ENCODE measurements at regions of chr7 and their contacts with region 1.

Region 1: DNA sequence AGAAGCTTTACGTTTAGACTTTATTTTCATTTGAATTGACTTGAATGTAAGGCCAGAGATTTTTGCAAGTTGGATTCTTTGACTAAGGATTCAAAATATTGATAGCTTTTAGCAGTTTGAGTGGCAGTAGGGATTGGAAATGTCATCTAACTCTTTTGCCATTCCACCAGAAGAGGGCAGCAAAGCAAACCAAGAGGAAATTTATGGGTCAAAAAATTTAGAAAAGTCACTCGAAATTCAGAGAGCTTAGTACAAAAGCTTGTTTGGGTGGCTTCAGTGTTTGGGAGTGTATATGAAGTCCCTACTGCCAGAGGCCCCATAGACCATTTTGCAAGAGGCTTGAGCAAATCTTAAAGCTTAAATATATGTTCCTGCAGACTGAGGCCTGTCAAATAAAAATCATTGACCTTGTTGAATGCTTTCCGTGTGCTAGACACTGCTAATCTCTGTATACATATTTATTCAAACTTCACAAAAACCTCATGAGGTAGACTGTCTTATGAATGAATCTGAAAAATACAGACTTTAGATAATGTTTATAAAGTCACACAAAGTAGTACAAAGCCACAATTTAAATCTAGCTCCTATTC is 44.6 kb upstream of the RSBN1L start:
- DNase-seq: peak; percentile 61
- H3K4me3 ChIP-seq: no peak overlapping the region; a peak in 1 of 4 replicates
- H3K27ac ChIP-seq: no peak overlapping the region
- H3K4me1 ChIP-seq: peaks cover 0 to 7% of the 10 kb centered on the region in 2 experiments; a peak in 1 of 4 replicates
- H3K27me3 ChIP-seq: no peaks in the 10 kb centered on the region
- CTCF ChIP-seq: peak; percentile 97
- EP300 ChIP-seq: no peak
- RAD21 ChIP-seq: peak; percentile 73

Region 2: DNA sequence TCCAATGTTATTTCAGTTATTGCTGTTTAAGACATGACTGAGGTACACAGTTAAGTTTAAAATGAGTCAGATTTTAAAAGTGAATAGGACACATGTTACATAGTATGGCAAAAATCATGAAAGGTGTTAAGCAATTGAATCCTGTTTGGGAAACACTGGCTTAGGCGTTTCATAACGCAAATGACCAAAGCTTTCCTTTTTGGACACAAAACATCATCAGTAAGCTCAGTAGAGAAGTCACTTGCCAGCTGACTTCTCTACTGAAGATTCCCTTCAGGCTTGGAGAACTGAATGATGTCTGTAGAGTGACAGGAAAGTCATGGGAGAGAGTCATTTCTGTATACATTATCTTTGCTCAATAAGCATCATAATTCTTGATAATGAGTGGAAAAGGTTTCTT is 19.8 kb before region 1 on chr7:
- CTCF ChIA-PET with region 1: interaction called, 19 read pairs
- POLR2A ChIA-PET with region 1: no interaction called
- DNase-seq: no peak
- H3K4me3 ChIP-seq: no peak overlapping the region
- H3K27ac ChIP-seq: no peak overlapping the region
- H3K4me1 ChIP-seq: no peaks in the 10 kb centered on the region
- H3K27me3 ChIP-seq: no peaks in the 10 kb centered on the region
- CTCF ChIP-seq: no peak
- EP300 ChIP-seq: no peak
- RAD21 ChIP-seq: no peak

Region 3: DNA sequence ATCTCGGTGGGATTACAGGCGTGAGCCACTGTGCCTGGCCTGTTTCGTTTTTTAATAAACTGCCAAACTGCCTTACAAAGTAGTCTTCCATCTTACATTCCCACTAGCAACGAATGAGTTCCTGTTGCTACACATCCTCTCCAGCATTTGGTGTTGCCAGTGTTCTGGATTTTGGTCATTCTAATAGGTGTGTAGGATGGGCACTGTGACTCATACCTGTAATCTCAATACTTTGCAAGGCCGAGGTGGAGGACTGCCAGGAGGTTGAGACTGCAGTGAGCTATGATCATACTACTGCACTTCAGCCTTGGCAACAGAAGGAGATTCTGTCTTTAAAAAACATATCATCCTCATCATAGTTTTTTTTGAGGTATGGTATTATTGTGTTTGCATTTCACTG is 23.2 kb after region 1 on chr7:
- CTCF ChIA-PET with region 1: interaction called, 21 read pairs
- POLR2A ChIA-PET with region 1: no interaction called
- DNase-seq: no peak
- H3K4me3 ChIP-seq: no peak overlapping the region
- H3K27ac ChIP-seq: no peak overlapping the region
- H3K4me1 ChIP-seq: no peaks in the 10 kb centered on the region
- H3K27me3 ChIP-seq: no peaks in the 10 kb centered on the region
- CTCF ChIP-seq: no peak
- EP300 ChIP-seq: no peak
- RAD21 ChIP-seq: no peak

Region 4: GRCh38 chr7:77696198-77697028 is 44.7 kb after region 1 on chr7 and contains the start of gene RSBN1L:
- CTCF ChIA-PET with region 1: interaction called, 23 read pairs
- POLR2A ChIA-PET with region 1: no interaction called
- DNase-seq: peak; percentile 99
- H3K4me3 ChIP-seq: peak within 1 kb of the TSS; percentile 75 to 96
- H3K27ac ChIP-seq: peak within 1 kb of the TSS; percentile 85 to 91
- H3K4me1 ChIP-seq: peaks cover 3 to 10% of the 10 kb centered on the region in 2 experiments; a peak in 3 of 4 replicates
- H3K27me3 ChIP-seq: no peaks in the 10 kb centered on the region
- CTCF ChIP-seq: peak; percentile 47
- EP300 ChIP-seq: no peak; a peak in 1 of 4 replicates
- RAD21 ChIP-seq: no peak
- polyA plus RNA-seq, gene RSBN1L: 5.6 and 6.5 TPM in 2 replicates

Region 5: GRCh38 chr7:77727936-77728701 is 76.5 kb after region 1 on chr7:
- CTCF ChIA-PET with region 1: interaction called, 14 read pairs
- POLR2A ChIA-PET with region 1: no interaction called
- DNase-seq: peak; percentile 51
- H3K4me3 ChIP-seq: peak overlapping the region in 1 of 2 experiments; percentile 20; a peak in 1 of 4 replicates
- H3K27ac ChIP-seq: peak overlapping the region; percentile 67
- H3K4me1 ChIP-seq: peaks cover 18 to 32% of the 10 kb centered on the region in 2 experiments
- H3K27me3 ChIP-seq: no peaks in the 10 kb centered on the region
- CTCF ChIP-seq: no peak
- EP300 ChIP-seq: no peak
- RAD21 ChIP-seq: no peak

Region 6: GRCh38 chr7:77765906-77766800 is 114.5 kb after region 1 on chr7:
- CTCF ChIA-PET with region 1: interaction called, 392 read pairs
- POLR2A ChIA-PET with region 1: no interaction called
- DNase-seq: no peak
- H3K4me3 ChIP-seq: no peak overlapping the region
- H3K27ac ChIP-seq: no peak overlapping the region
- H3K4me1 ChIP-seq: no peaks in the 10 kb centered on the region
- H3K27me3 ChIP-seq: no peaks in the 10 kb centered on the region
- CTCF ChIP-seq: no peak
- EP300 ChIP-seq: no peak
- RAD21 ChIP-seq: no peak

Region 7: GRCh38 chr7:77940647-77941046 is 289.0 kb after region 1 on chr7:
- CTCF ChIA-PET with region 1: interaction called, 42 read pairs
- POLR2A ChIA-PET with region 1: no interaction called
- DNase-seq: peak; percentile 67
- H3K4me3 ChIP-seq: no peak overlapping the region; a peak in 1 of 4 replicates
- H3K27ac ChIP-seq: no peak overlapping the region
- H3K4me1 ChIP-seq: no peaks in the 10 kb centered on the region
- H3K27me3 ChIP-seq: no peaks in the 10 kb centered on the region
- CTCF ChIP-seq: peak; percentile 99
- EP300 ChIP-seq: no peak
- RAD21 ChIP-seq: peak; percentile 91